ENCODE measurements at regions of chr12 and their contacts with region 1.

Region 1: GRCh38 chr12:14239350-14239934 is 126.0 kb upstream of the ATF7IP start:
- DNase-seq: no peak
- H3K4me3 ChIP-seq: peak overlapping the region in 1 of 4 donors; percentile 4
- H3K27ac ChIP-seq: peak overlapping the region in 1 of 4 donors; percentile 14
- H3K4me1 ChIP-seq: peaks cover 0 to 3% (median 0%) of the 10 kb centered on the region in 4 donors
- H3K27me3 ChIP-seq: no peaks in the 10 kb centered on the region
- CTCF ChIP-seq: no peak
- EP300 ChIP-seq: no peak
- POLR2A ChIP-seq: no peak

Region 2: GRCh38 chr12:14417715-14418114 is 178.3 kb after region 1 on chr12:
- intact Hi-C with region 1: loop called (anchors 5 kb)
- DNase-seq: peak; percentile 77
- H3K4me3 ChIP-seq: peak overlapping the region in 1 of 4 donors; percentile 23
- H3K27ac ChIP-seq: peak overlapping the region in 2 of 4 donors; percentile 46 to 62
- H3K4me1 ChIP-seq: peaks cover 0 to 48% (median 33%) of the 10 kb centered on the region in 4 donors
- H3K27me3 ChIP-seq: no peaks in the 10 kb centered on the region
- CTCF ChIP-seq: no peak
- EP300 ChIP-seq: no peak
- POLR2A ChIP-seq: no peak

Region 3: GRCh38 chr12:14618983-14619382 is 379.5 kb after region 1 on chr12:
- intact Hi-C with region 1: loop called (anchors 2 kb)
- DNase-seq: no peak
- H3K4me3 ChIP-seq: no peak overlapping the region
- H3K27ac ChIP-seq: no peak overlapping the region
- H3K4me1 ChIP-seq: peaks cover 0 to 3% (median 0%) of the 10 kb centered on the region in 4 donors
- H3K27me3 ChIP-seq: no peaks in the 10 kb centered on the region
- CTCF ChIP-seq: peak in 1 of 4 experiments; percentile 32
- EP300 ChIP-seq: no peak
- POLR2A ChIP-seq: no peak

Region 4: GRCh38 chr12:14664510-14664909 is 425.1 kb after region 1 on chr12:
- intact Hi-C with region 1: loop called (anchors 2 kb)
- DNase-seq: no peak
- H3K4me3 ChIP-seq: no peak overlapping the region
- H3K27ac ChIP-seq: no peak overlapping the region
- H3K4me1 ChIP-seq: no peaks in the 10 kb centered on the region
- H3K27me3 ChIP-seq: no peaks in the 10 kb centered on the region
- CTCF ChIP-seq: peak; percentile 30 to 56 (median 42)
- EP300 ChIP-seq: no peak
- POLR2A ChIP-seq: no peak